ENCODE measurements at regions of chr2 and their contacts with region 1.

Region 1: GRCh38 chr2:229873123-229873581 is 48.7 kb downstream of the TRIP12 start:
- DNase-seq: no peak
- ATAC-seq: peak; percentile 70
- H3K4me3 Mint-ChIP-seq: peak overlapping the region; percentile 46
- H3K27ac Mint-ChIP-seq: peak overlapping the region; percentile 79
- H3K4me1 Mint-ChIP-seq: peaks cover 25% of the 10 kb centered on the region
- H3K27me3 Mint-ChIP-seq: no peaks in the 10 kb centered on the region
- CTCF ChIP-seq: no peak

Region 2: GRCh38 chr2:229725716-229726574 is 147.2 kb before region 1 on chr2:
- CTCF ChIA-PET with region 1: no interaction called
- POLR2A ChIA-PET with region 1: no interaction called
- intact Hi-C with region 1: no loop called
- DNase-seq: no peak
- ATAC-seq: no peak
- H3K4me3 Mint-ChIP-seq: no peak overlapping the region
- H3K27ac Mint-ChIP-seq: no peak overlapping the region
- H3K4me1 Mint-ChIP-seq: no peaks in the 10 kb centered on the region
- H3K27me3 Mint-ChIP-seq: peaks cover 15% of the 10 kb centered on the region
- CTCF ChIP-seq: no peak

Region 3: DNA sequence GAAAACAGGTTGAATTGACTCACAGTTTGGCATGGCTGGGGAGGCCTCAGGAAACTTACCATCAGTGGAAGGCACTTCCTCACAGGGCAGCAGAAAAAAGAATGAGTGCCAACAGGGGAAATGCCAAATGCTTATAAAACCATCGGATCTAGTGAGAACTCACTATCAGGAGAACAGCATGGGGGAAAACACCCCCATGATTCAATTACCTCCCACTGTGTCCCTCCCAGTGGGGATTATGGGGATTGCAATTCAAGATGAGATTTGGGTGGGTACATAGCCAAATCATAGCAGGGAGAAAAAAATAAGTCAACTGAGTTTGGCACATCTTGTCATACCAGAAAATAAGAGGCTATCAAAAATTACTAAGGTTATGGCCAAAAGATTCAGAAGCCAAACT is 47.7 kb before region 1 on chr2:
- CTCF ChIA-PET with region 1: no interaction called
- POLR2A ChIA-PET with region 1: no interaction called
- intact Hi-C with region 1: loop called (anchors 5 kb)
- DNase-seq: no peak
- ATAC-seq: no peak
- H3K4me3 Mint-ChIP-seq: no peak overlapping the region
- H3K27ac Mint-ChIP-seq: no peak overlapping the region
- H3K4me1 Mint-ChIP-seq: peaks cover 17% of the 10 kb centered on the region
- H3K27me3 Mint-ChIP-seq: no peaks in the 10 kb centered on the region
- CTCF ChIP-seq: no peak

Region 4: GRCh38 chr2:229852565-229852964 is 20.6 kb before region 1 on chr2:
- CTCF ChIA-PET with region 1: no interaction called
- POLR2A ChIA-PET with region 1: no interaction called
- intact Hi-C with region 1: loop called (anchors 2 kb)
- DNase-seq: no peak
- ATAC-seq: peak; percentile 54
- H3K4me3 Mint-ChIP-seq: no peak overlapping the region
- H3K27ac Mint-ChIP-seq: no peak overlapping the region
- H3K4me1 Mint-ChIP-seq: peaks cover 53% of the 10 kb centered on the region
- H3K27me3 Mint-ChIP-seq: no peaks in the 10 kb centered on the region
- CTCF ChIP-seq: no peak

Region 5: GRCh38 chr2:229861431-229861830 is 11.7 kb before region 1 on chr2:
- CTCF ChIA-PET with region 1: no interaction called
- POLR2A ChIA-PET with region 1: no interaction called
- intact Hi-C with region 1: loop called (anchors 1 kb)
- DNase-seq: no peak
- ATAC-seq: no peak
- H3K4me3 Mint-ChIP-seq: no peak overlapping the region
- H3K27ac Mint-ChIP-seq: no peak overlapping the region
- H3K4me1 Mint-ChIP-seq: peaks cover 18% of the 10 kb centered on the region
- H3K27me3 Mint-ChIP-seq: no peaks in the 10 kb centered on the region
- CTCF ChIP-seq: no peak